ENCODE measurements at regions of chr22 and their contacts with region 1.

Region 1: GRCh38 chr22:29306175-29306834 is at the start of gene GAS2L1:
- DNase-seq: peak; percentile 83 to 91
- H3K4me3 ChIP-seq: peak within 1 kb of the TSS; percentile 93 to 96
- H3K27ac ChIP-seq: peak within 1 kb of the TSS; percentile 89 to 91
- H3K4me1 ChIP-seq: peaks cover 4 to 60% (median 53%) of the 10 kb centered on the region in 4 donors
- H3K27me3 ChIP-seq: no peaks in the 10 kb centered on the region
- CTCF ChIP-seq: peak; percentile 61 to 72

Region 2: GRCh38 chr22:29267858-29268417 is 38.4 kb before region 1 on chr22 and contains the starts of genes EWSR1 and RHBDD3:
- intact Hi-C with region 1: loop called (anchors 5 kb)
- DNase-seq: peak; percentile 95 to 98
- H3K4me3 ChIP-seq: peak within 1 kb of the TSS; percentile 90 to 95
- H3K27ac ChIP-seq: peak within 1 kb of the TSS; percentile 98 to 99
- H3K4me1 ChIP-seq: peaks cover 0 to 49% (median 32%) of the 10 kb centered on the region in 4 donors
- H3K27me3 ChIP-seq: no peaks in the 10 kb centered on the region
- CTCF ChIP-seq: no peak

Region 3: DNA sequence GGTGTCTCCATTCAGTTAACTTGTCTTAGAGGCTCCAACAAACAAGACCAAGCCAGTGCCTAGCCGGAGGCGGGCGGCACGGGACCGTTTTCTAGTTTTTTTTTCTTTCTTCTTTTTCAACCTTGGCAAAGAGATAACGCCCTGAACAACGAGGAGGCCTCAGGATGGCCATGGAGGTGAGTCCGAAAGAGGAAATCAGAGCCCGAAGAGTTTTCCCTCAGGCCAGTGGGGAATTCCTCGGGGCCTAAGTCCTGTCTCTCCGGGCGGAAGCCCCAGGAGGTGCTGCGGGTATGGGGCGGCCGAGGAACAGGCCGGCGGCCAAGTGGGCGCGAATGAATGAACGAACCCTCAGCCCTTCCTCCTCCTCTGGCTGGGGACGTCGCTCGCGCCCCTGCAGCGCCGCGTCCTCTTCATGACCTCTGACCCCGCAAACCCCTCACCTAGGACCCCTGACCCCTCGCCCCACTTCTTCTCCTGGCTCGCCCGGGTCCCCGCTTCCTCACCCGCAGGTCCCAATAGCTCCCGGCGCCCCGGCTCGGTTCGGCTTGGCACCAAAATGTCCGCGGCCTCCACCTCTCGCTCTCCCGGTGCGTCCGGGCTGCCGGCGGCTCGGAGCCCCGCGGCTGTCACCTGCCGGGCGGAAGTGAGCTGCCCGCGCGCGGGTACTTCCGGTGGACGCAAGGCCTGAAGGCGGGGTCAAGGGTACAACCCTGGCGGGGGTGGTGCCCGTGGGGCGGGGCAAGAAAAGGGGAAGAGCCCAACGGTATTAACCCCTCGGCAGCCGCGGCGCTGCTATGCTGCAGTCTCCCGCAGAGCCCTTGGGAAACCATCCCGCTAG is 81.8 kb after region 1 on chr22 and contains the start of gene AP1B1:
- intact Hi-C with region 1: loop called (anchors 5 kb)
- DNase-seq: peak; percentile 89 to 94
- H3K4me3 ChIP-seq: peak within 1 kb of the TSS; percentile 70 to 72
- H3K27ac ChIP-seq: peak within 1 kb of the TSS; percentile 71 to 82
- H3K4me1 ChIP-seq: peaks cover 0 to 33% (median 16%) of the 10 kb centered on the region in 4 donors
- H3K27me3 ChIP-seq: no peaks in the 10 kb centered on the region
- CTCF ChIP-seq: no peak

Measured in tibial artery (tissue), 4 donors.